ENCODE measurements at regions of chr3 and their contacts with region 1.

Region 1: DNA sequence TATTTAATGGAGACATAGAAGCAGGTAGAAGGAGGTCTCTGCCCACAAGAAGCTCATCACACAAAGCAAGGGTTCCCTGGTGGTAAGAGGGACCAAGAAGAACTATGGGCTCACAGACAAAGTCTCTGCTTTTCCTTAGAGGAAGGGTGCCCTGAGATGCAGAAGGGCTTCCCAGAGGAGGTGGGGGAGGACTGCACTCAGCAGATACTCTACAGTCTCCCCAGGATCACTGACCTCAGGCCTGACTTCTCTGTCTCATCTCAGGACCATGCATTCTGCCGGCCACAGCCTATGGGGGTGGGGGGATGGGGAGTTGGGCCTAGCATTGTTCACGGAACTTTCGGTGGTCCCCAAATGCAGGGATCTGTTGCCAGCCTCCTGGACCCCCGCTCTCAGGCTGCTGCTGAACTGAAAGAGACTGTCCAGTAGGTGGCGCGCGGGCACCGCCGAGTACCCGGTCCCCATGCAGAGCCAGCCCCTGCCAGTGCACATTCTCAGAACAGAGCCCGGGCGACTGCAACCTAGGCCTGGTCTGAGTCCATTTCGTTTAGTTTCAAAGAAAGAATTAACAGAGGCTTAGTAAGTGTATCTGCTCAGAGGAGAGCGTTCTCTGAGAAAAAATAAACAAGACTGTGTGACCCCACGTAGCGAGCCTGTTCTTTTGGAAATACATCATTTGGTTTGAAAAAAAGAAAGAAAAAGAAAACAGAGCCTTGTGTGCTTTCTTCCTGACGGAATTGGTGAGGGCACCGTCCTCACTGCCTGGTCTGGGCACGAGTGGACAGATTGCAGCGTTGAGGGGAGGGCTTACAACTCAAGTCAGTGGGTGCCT is 74.1 kb downstream of the LRTM1 start:
- DNase-seq: peak; percentile 80 to 89 (median 85)
- H3K4me3 ChIP-seq: no peak overlapping the region
- H3K27ac ChIP-seq: no peak overlapping the region
- H3K4me1 ChIP-seq: no peaks in the 10 kb centered on the region
- H3K27me3 ChIP-seq: no peaks in the 10 kb centered on the region
- CTCF ChIP-seq: peak; percentile 75 to 90 (median 77)
- EP300 ChIP-seq: no peak
- POLR2A ChIP-seq: no peak

Region 2: DNA sequence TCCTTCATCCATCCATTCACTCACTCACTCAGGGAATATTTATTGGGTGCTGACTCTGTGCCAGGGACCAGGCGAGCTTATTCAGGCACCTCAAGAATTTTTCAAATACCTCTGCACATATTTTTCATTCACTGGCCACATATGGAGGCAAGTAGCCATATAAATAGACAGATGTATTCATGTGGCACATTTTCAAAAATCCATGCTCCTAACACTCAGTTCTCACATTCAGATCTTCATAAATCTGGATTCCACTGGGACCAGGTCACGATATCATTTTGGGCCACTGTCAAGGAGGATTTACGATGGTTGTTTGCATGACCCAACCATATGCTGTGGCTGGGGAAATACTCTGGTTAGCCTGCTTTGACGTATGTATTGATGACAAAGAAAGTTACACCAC is 315.8 kb after region 1 on chr3:
- intact Hi-C with region 1: loop called in 1 of 4 experiments (anchors 10 kb)
- DNase-seq: no peak
- H3K4me3 ChIP-seq: no peak overlapping the region
- H3K27ac ChIP-seq: no peak overlapping the region
- H3K4me1 ChIP-seq: peaks cover 3% of the 10 kb centered on the region
- H3K27me3 ChIP-seq: no peaks in the 10 kb centered on the region
- CTCF ChIP-seq: no peak
- EP300 ChIP-seq: no peak
- POLR2A ChIP-seq: no peak

Region 3: DNA sequence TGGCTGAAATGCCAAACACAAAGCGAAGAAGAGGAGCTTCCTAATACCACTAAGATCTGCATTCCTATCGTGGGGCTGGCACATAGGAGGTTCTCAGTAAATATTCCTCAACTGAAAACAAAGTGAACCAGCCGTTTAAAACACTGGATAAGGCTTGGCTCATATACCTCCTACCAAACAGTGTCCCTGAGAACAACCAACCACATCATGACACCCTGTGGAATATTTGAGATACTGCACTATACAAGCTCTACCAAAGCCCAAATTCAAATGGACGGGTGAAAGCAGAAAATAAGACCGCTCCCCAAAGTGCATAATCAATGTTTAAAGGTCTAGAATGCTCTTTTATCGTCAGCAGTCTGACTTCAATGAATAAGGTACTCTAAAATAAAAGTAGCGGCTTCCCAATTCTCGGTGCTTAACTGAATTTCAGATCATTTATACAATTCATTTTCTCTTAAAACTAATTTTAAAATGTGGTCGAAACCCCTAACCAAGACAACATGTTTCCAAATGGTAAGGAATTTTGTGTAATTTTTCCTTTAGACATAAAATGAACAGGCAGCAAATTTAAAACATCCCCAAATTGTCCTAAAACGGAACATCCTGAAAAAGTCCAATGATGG is 1188.7 kb after region 1 on chr3:
- intact Hi-C with region 1: loop called in 1 of 4 experiments (anchors 10 kb)
- DNase-seq: no peak
- H3K4me3 ChIP-seq: no peak overlapping the region
- H3K27ac ChIP-seq: no peak overlapping the region
- H3K4me1 ChIP-seq: no peaks in the 10 kb centered on the region
- H3K27me3 ChIP-seq: no peaks in the 10 kb centered on the region
- CTCF ChIP-seq: peak; percentile 53 to 66 (median 59)
- EP300 ChIP-seq: no peak
- POLR2A ChIP-seq: no peak

Region 4: DNA sequence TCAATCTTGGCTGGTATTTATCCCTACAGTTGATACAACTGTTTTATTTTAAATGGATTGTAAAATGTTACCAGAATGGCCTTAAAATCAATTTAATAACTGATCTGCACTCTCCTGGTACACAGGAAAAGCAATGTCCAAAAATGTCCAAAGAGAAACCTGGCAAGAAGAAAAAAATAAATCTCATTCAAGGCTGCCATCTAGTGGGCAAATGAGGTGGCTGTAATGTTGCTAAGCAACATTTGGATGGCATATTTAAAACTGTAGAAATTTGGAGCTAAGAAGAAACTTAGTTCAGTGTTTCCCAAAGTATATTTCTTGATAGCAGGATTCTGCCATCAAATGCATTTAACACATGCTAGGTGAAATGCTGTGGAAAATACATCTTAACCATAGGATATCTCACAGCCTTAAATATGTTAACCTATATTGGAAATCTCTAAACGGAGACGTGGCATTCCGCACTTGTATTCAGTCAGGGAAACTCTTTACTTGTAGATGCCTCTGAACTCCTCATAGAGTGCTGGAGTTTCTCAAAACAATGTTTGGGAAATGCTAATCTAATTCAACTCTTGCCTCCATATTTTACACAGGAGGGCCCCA is 1397.7 kb after region 1 on chr3:
- intact Hi-C with region 1: loop called in 1 of 4 experiments (anchors 10 kb)
- DNase-seq: peak in 4 of 5 donors; percentile 28 to 69 (median 54)
- H3K4me3 ChIP-seq: no peak overlapping the region
- H3K27ac ChIP-seq: no peak overlapping the region
- H3K4me1 ChIP-seq: no peaks in the 10 kb centered on the region
- H3K27me3 ChIP-seq: no peaks in the 10 kb centered on the region
- CTCF ChIP-seq: peak; percentile 35 to 68 (median 67)
- EP300 ChIP-seq: no peak
- POLR2A ChIP-seq: no peak

Measured in ovary (tissue), 10 donors.